K562 (cell line): ENCODE measurements at regions of chr12 and their contacts with region 1.

Region 1: DNA sequence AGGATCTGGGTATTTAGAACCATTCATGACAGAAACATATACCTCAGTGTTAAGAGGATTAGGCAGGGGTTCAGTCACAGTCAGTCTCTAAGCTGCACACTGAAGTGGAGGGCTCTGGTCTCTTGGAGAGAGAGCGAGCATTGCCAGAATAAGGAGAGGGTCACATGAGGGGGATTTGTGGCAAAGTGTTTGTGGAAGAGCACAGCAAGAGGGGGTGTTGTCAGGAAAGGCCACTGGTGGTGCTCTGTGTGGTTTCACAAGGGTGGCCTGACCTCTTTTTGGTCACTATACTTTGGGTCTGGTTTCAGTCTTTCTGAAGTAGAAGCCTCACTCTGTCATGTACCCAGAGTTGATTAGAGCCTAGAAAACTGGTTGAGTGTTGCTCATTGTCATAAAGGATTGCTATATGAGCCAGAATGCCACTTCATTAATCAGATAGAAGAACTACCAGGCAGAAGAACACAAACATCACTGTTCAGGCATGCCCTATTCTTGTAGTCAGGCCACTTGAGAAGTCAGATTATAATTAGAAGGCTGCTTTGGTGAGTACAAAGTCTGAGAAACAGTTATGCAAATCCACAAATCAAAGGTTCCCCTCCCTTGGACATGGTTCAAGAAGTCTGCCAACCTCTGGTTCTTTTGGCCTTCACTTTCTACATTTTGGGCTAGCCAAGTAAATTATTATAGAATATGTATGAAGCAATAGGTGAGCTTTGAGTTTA is 8.4 kb downstream of the TMEM19 start:
- DNase-seq: no peak
- ATAC-seq: peak; percentile 49
- H3K4me3 ChIP-seq: no peak overlapping the region
- H3K27ac ChIP-seq: no peak overlapping the region
- H3K4me1 ChIP-seq: peaks cover 0 to 1% of the 10 kb centered on the region in 2 experiments; a peak in 1 of 5 replicates
- H3K27me3 ChIP-seq: no peaks in the 10 kb centered on the region
- CTCF ChIP-seq: no peak
- EP300 ChIP-seq: no peak
- POLR2A ChIP-seq: no peak
- RAD21 ChIP-seq: no peak

Region 2: DNA sequence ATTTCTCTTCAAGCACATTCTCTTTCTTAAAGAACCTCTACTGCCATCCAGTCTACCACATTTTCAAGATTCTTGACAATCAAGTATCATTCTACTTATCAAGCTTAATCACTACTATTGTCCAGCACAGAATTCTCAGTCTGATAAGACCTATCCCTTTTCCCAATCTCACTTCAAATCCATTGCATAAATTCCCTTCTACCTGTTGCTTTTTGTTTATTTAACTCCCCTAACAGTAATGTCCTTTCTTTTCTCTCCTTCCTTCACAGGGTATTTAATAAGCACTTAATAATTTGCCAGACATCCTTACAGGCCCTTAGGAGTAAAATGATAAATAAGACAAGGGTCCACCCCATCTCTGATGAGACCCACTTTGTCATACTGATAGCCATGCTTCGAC is 72.3 kb before region 1 on chr12:
- CTCF ChIA-PET with region 1: no interaction called
- POLR2A ChIA-PET with region 1: no interaction called
- in situ Hi-C with region 1: no loop called
- intact Hi-C with region 1: no loop called
- DNase-seq: no peak
- ATAC-seq: no peak
- H3K4me3 ChIP-seq: no peak overlapping the region
- H3K27ac ChIP-seq: no peak overlapping the region
- H3K4me1 ChIP-seq: no peaks in the 10 kb centered on the region
- H3K27me3 ChIP-seq: no peaks in the 10 kb centered on the region
- CTCF ChIP-seq: no peak
- EP300 ChIP-seq: no peak
- POLR2A ChIP-seq: no peak
- RAD21 ChIP-seq: no peak

Region 3: GRCh38 chr12:71710276-71711125 is 16.2 kb after region 1 on chr12:
- CTCF ChIA-PET with region 1: no interaction called
- POLR2A ChIA-PET with region 1: interaction called, 10 read pairs
- in situ Hi-C with region 1: no loop called
- intact Hi-C with region 1: no loop called
- DNase-seq: peak in 1 of 4 experiments; percentile 19
- ATAC-seq: no peak
- H3K4me3 ChIP-seq: no peak overlapping the region
- H3K27ac ChIP-seq: no peak overlapping the region
- H3K4me1 ChIP-seq: no peaks in the 10 kb centered on the region
- H3K27me3 ChIP-seq: no peaks in the 10 kb centered on the region
- CTCF ChIP-seq: no peak
- EP300 ChIP-seq: no peak
- POLR2A ChIP-seq: no peak
- RAD21 ChIP-seq: no peak